HepG2 (cell line): ENCODE measurements at regions of chr11 and their contacts with region 1.

Region 1: DNA sequence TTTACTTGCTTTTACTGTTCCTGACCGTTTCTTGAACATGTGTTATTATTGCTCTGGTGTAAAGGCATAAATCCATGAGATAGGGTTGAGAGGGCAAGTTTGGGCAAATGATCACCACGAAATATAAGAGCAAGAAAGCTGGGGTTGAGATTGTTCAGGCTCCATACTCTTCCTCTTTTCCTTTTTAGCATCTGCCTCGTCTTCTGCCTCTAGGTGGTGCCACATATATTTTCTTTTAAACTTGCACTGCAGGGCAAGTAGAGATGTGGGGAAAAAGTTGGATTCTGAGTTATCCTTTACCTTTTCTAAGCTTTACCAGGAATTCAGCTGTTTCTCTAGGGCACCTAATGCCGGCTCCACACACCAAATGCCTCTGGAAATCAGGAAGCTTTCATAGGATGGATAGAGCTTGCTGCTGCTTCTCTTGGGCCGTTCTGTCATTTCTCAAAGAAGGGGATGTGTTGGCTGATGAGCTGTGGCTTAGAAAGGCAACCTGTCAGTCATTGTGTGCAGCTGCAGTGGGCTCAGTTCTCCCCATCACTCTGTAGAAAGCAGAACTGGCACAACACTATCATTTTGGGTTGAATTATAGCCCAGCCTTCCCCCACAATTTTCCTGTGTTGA is 98.2 kb downstream of the LDLRAD3 start:
- DNase-seq: no peak
- ATAC-seq: peak; percentile 54
- H3K4me3 ChIP-seq: no peak overlapping the region
- H3K27ac ChIP-seq: no peak overlapping the region
- H3K4me1 ChIP-seq: no peaks in the 10 kb centered on the region
- H3K27me3 ChIP-seq: peaks cover 0 to 1% of the 10 kb centered on the region in 2 experiments; a peak in 1 of 5 replicates
- CTCF ChIP-seq: peak; percentile 45
- EP300 ChIP-seq: no peak
- POLR2A ChIP-seq: no peak
- RAD21 ChIP-seq: no peak

Region 2: DNA sequence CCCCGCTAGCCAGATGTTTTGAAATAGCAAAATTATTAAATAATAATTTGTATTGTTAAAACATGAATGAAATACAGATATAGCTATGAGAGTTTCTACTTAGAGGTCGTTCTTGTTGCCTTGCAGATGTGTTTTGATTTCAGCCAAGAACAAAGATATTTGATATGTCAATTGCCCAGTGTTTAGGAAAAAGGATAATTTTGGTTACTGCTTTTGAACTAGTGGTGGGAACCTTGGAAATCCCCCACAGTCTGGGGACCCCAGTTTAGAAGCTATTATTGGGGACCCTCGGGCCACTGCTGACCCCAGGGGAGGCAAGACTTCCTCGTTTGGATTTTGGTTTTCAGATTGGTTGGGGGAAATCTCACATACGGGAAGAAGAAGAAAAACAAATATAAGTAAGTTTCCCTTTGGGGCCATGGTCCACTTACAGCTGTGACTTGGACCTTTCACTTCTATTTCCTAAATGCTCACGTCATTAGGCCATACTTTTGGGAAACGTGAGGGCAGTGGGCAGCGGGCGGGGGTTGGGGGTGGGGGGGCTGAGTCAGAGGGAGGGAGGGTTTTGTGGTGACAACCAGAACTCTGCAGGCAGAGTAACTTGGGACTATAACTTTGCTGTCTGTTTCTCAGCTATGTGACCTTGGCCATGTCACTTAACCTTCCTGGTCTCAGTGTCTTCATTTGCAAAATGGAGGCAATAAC is 61.3 kb before region 1 on chr11:
- CTCF ChIA-PET with region 1: no interaction called
- POLR2A ChIA-PET with region 1: no interaction called
- in situ Hi-C with region 1: no loop called
- intact Hi-C with region 1: no loop called
- DNase-seq: no peak
- ATAC-seq: no peak
- H3K4me3 ChIP-seq: no peak overlapping the region
- H3K27ac ChIP-seq: no peak overlapping the region
- H3K4me1 ChIP-seq: no peaks in the 10 kb centered on the region
- H3K27me3 ChIP-seq: peaks cover 0 to 5% of the 10 kb centered on the region in 2 experiments; a peak in 1 of 5 replicates
- CTCF ChIP-seq: no peak
- EP300 ChIP-seq: no peak
- POLR2A ChIP-seq: no peak
- RAD21 ChIP-seq: no peak

Region 3: GRCh38 chr11:36109850-36110606 is 67.9 kb after region 1 on chr11:
- CTCF ChIA-PET with region 1: no interaction called
- POLR2A ChIA-PET with region 1: no interaction called
- in situ Hi-C with region 1: no loop called
- intact Hi-C with region 1: no loop called
- DNase-seq: no peak
- ATAC-seq: no peak
- H3K4me3 ChIP-seq: no peak overlapping the region
- H3K27ac ChIP-seq: no peak overlapping the region
- H3K4me1 ChIP-seq: no peaks in the 10 kb centered on the region
- H3K27me3 ChIP-seq: peaks cover 0 to 17% of the 10 kb centered on the region in 2 experiments; a peak in 3 of 5 replicates
- CTCF ChIP-seq: no peak
- EP300 ChIP-seq: no peak
- POLR2A ChIP-seq: no peak
- RAD21 ChIP-seq: no peak

Region 4: GRCh38 chr11:36131721-36132397 is 89.8 kb after region 1 on chr11:
- CTCF ChIA-PET with region 1: no interaction called
- POLR2A ChIA-PET with region 1: no interaction called
- in situ Hi-C with region 1: no loop called
- intact Hi-C with region 1: loop called (anchors 1 kb)
- DNase-seq: peak; percentile 20
- ATAC-seq: peak; percentile 82
- H3K4me3 ChIP-seq: no peak overlapping the region
- H3K27ac ChIP-seq: no peak overlapping the region
- H3K4me1 ChIP-seq: no peaks in the 10 kb centered on the region
- H3K27me3 ChIP-seq: peaks cover 6 to 14% of the 10 kb centered on the region in 2 experiments; a peak in 3 of 5 replicates
- CTCF ChIP-seq: peak; percentile 81
- EP300 ChIP-seq: no peak
- POLR2A ChIP-seq: no peak
- RAD21 ChIP-seq: no peak

Region 5: GRCh38 chr11:36258730-36259360 is 216.7 kb after region 1 on chr11:
- CTCF ChIA-PET with region 1: no interaction called
- POLR2A ChIA-PET with region 1: no interaction called
- in situ Hi-C with region 1: loop called (anchors 10 kb)
- intact Hi-C with region 1: loop called (anchors 2 kb)
- DNase-seq: peak; percentile 29
- ATAC-seq: peak; percentile 94
- H3K4me3 ChIP-seq: no peak overlapping the region
- H3K27ac ChIP-seq: no peak overlapping the region
- H3K4me1 ChIP-seq: no peaks in the 10 kb centered on the region
- H3K27me3 ChIP-seq: peaks cover 3 to 28% of the 10 kb centered on the region in 2 experiments; a peak in 4 of 5 replicates
- CTCF ChIP-seq: peak; percentile 75
- EP300 ChIP-seq: no peak
- POLR2A ChIP-seq: no peak
- RAD21 ChIP-seq: peak; percentile 27; the same call in 1 of the 2 replicates

Region 6: DNA sequence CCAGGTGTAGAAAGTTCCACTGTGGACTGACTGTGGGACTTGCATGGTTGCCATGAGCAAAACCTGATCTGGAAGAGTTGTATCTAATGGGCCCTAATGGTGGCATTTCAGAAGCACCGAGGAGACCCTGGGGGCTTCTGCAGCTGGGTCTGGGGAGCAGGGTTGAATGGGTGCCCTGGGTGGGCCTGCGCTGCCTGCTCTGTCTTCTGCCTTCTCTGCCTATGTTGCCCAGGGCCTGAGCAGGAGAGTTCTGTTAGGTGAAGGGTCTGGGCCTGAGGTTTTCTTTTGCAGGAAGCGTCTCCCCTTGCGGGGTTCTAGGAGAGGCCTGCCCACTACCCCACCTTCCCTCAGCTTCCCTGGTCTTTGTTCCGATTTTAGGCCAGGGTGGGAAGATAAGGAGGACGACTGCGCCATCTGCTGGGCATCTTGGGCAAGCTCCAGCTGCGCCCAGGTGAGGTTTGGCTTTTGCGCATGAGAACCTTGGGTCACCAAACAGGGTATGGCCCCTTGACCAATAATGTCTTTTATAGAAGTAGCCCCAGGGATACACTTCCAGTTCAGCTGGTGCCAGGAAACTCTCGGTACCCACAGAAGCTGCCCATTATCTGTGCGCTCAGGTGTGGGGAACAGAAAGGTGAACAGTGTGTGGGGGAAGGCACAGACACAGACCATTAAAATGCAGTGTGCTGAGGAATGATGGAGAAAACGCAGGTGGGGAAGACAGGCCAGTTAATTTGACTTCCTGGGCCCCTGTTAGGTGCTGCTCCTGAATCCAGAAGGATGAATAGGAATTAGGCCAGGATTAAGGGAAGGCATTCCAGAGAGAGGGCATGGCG is 223.9 kb after region 1 on chr11:
- CTCF ChIA-PET with region 1: no interaction called
- POLR2A ChIA-PET with region 1: no interaction called
- in situ Hi-C with region 1: loop called (anchors 10 kb)
- intact Hi-C with region 1: no loop called
- DNase-seq: peak; percentile 16
- ATAC-seq: peak; percentile 89
- H3K4me3 ChIP-seq: no peak overlapping the region
- H3K27ac ChIP-seq: no peak overlapping the region
- H3K4me1 ChIP-seq: no peaks in the 10 kb centered on the region
- H3K27me3 ChIP-seq: peaks cover 0 to 10% of the 10 kb centered on the region in 2 experiments; a peak in 2 of 5 replicates
- CTCF ChIP-seq: peak; percentile 88
- EP300 ChIP-seq: no peak
- POLR2A ChIP-seq: no peak
- RAD21 ChIP-seq: peak; percentile 64

Region 7: DNA sequence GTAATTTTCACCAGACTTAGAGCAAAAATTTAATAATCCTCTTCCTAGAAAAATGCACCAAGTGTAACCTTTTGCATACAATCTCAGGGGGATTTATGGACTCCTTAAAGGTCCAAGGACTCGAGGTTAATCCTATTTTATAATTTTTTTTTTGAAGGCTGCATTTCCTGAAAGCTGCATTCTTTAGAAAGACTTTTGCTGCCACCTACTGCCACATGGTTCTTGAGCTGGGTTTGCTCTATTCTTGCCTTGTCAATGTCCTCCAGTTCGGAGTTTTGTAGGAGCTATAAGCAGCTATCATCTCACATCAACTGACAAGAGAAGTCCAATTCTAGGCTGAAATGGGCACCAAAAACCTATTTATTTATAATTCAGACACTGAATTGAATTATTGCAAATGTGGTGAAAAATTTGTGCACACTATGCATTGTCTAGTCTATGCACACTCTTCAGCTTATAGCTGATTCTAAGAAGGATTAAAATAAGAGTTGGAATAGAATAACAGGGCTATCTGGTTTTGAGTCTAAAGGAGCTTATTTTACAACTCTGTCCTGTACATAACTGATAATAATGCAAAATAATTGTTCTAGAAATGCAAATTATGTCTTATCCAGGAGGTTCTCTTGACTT is 436.7 kb after region 1 on chr11:
- CTCF ChIA-PET with region 1: no interaction called
- POLR2A ChIA-PET with region 1: no interaction called
- in situ Hi-C with region 1: no loop called
- intact Hi-C with region 1: loop called (anchors 5 kb)
- DNase-seq: peak; percentile 39
- ATAC-seq: peak; percentile 76
- H3K4me3 ChIP-seq: no peak overlapping the region
- H3K27ac ChIP-seq: no peak overlapping the region
- H3K4me1 ChIP-seq: no peaks in the 10 kb centered on the region
- H3K27me3 ChIP-seq: no peaks in the 10 kb centered on the region
- CTCF ChIP-seq: peak; percentile 61
- EP300 ChIP-seq: no peak
- POLR2A ChIP-seq: no peak
- RAD21 ChIP-seq: no peak